Right cardiac atrium (tissue), 5 donors: ENCODE measurements at regions of chr4 and their contacts with region 1.

Region 1: GRCh38 chr4:148044912-148045352 is 313.0 kb downstream of the ARHGAP10 start:
- DNase-seq: no peak
- ATAC-seq: peak; percentile 36 to 52
- H3K4me3 ChIP-seq: no peak overlapping the region
- H3K27ac ChIP-seq: peak overlapping the region; percentile 98
- H3K4me1 ChIP-seq: peaks cover 4% of the 10 kb centered on the region
- H3K27me3 ChIP-seq: no peaks in the 10 kb centered on the region

Region 2: GRCh38 chr4:147994491-147995385 is 50.2 kb before region 1 on chr4:
- intact Hi-C with region 1: loop called in 1 of 4 experiments (anchors 5 kb)
- DNase-seq: no peak
- ATAC-seq: no peak
- H3K4me3 ChIP-seq: no peak overlapping the region
- H3K27ac ChIP-seq: no peak overlapping the region
- H3K4me1 ChIP-seq: peaks cover 6% of the 10 kb centered on the region
- H3K27me3 ChIP-seq: no peaks in the 10 kb centered on the region

Region 3: DNA sequence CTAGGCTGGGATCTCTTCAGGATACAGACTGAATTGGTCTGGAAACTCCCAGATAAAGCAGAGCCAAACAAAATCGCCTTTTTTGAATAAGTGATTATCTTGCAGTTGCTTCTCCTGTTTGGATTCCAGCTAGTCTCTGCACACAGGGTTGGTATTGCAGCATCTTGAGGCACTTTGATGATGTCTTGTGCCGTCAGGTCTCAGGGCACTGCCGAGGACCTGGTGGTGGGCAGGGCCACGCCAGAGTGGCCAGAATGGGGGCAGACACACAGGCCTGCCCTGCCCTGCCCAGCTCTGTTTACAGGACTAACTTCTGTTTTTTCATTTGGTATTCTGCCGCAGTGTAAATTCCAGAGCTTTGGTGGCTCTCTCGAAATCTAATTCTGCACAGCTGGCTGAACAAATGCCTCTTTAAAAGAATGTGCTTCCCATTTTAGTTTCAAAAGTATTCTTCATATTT is 121.2 kb after region 1 on chr4:
- intact Hi-C with region 1: no loop called
- DNase-seq: peak in 2 of 3 donors; percentile 14 to 74
- ATAC-seq: peak; percentile 83 to 88
- H3K4me3 ChIP-seq: peak overlapping the region; percentile 22
- H3K27ac ChIP-seq: peak overlapping the region; percentile 72
- H3K4me1 ChIP-seq: peaks cover 4% of the 10 kb centered on the region
- H3K27me3 ChIP-seq: no peaks in the 10 kb centered on the region